H1 (cell line): ENCODE measurements at regions of chr2 and their contacts with region 1.

Region 1: GRCh38 chr2:38740851-38741731 is 10.1 kb downstream of the SRSF7 start:
- DNase-seq: no peak
- H3K4me3 ChIP-seq: no peak overlapping the region
- H3K27ac ChIP-seq: no peak overlapping the region
- H3K4me1 ChIP-seq: peaks cover 0 to 7% (median 1%) of the 10 kb centered on the region in 4 experiments; a peak in 4 of 7 replicates
- H3K27me3 ChIP-seq: no peaks in the 10 kb centered on the region
- CTCF ChIP-seq: peak in 2 of 3 experiments; percentile 11 to 17; a peak in 2 of 4 replicates
- EP300 ChIP-seq: no peak
- POLR2A ChIP-seq: 0 out of 3 replicates have a peak, but pooled peaks of 1 of the 2 experiments have one; percentile 60
- RAD21 ChIP-seq: peak; percentile 33 to 40

Region 2: DNA sequence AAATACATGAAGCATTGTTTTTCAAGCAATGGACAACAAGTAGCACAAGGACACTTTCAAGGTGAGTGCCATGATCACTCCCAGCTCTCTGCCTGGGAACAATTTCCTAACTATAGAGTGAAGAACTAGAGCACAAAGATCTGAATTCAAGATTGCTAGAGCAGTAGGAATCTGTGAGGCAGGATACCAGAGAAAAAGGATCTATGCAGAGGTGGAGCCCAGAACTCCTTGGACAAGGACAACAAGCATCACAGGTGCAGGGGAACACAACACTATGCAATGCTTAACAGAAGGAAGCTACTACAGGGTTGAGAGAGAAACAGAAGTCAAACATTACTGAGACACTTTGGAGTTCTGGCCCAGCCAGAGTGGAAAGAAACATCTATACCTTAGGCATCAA is 388.8 kb before region 1 on chr2:
- CTCF ChIA-PET with region 1: no interaction called
- POLR2A ChIA-PET with region 1: no interaction called
- DNase-seq: no peak
- H3K4me3 ChIP-seq: no peak overlapping the region
- H3K27ac ChIP-seq: no peak overlapping the region
- H3K4me1 ChIP-seq: peaks cover 0 to 6% (median 0%) of the 10 kb centered on the region in 4 experiments; a peak in 1 of 7 replicates
- H3K27me3 ChIP-seq: no peaks in the 10 kb centered on the region
- CTCF ChIP-seq: no peak
- EP300 ChIP-seq: no peak
- POLR2A ChIP-seq: no peak
- RAD21 ChIP-seq: no peak

Region 3: DNA sequence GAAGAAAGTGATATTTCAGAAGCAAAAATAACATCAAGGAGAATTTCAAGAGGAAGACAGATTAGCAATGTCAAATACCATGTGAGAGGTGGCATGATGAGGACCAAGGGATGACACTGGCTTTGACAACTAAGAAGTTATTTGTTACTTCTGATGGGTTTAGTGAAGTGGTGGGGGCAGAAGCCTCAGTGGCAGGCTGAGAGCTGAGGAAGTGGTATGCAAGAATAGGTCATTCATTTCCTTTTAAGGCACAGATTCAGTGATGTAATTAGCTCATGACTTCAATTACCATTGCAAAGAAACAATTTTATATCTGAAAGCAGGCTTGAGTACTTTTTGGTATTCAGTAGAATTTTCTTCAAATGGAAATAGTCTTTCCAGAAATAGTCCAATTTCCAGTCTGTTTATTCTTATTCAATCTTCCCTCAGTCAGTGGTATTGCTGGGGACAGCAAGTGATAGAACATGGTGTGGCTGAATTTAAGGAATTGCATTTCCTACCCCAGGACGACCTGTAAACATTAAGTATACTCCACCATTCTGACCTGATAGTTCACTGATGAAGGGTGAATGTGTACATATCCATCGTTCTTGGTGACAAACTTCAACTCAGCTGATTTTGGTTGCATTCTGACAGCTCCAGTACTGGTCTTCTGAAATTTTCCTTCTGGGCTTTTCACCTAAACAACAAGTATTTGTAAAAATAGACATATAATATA is 65.1 kb after region 1 on chr2:
- CTCF ChIA-PET with region 1: no interaction called
- POLR2A ChIA-PET with region 1: interaction called, 12 read pairs
- DNase-seq: no peak
- H3K4me3 ChIP-seq: no peak overlapping the region
- H3K27ac ChIP-seq: no peak overlapping the region
- H3K4me1 ChIP-seq: no peaks in the 10 kb centered on the region
- H3K27me3 ChIP-seq: no peaks in the 10 kb centered on the region
- CTCF ChIP-seq: no peak
- EP300 ChIP-seq: no peak
- POLR2A ChIP-seq: no peak
- RAD21 ChIP-seq: no peak

Region 4: DNA sequence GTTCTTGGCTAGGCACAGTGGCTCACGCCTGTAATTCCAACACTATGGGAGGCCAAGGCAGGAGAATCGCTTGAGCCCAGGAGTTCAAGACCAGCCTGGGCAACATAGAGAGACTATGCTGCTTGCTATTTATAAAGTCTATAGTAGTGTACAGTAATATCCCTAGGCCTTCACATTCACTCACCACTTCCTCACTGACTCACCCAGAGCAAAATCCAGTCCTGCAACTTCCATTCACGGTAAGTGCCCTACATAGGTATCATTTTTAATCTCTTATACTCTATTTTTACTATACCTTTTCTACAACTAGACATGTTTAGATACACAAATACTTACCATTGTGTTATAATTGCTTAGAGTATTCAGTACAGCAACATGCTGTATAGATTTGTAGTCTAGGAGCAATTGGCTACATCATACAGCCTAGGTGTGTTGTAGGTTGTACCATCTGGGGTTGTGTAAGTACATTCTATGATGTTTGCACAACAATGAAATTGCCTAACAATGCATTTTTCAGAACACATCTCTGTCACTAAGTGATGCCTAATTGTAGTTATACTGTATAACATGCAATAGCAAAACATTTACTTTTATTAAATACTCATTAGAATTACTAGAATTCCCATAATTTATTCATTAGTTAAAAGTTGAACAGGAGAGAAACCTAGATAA is 125.8 kb after region 1 on chr2:
- CTCF ChIA-PET with region 1: no interaction called
- POLR2A ChIA-PET with region 1: no interaction called
- DNase-seq: no peak
- H3K4me3 ChIP-seq: no peak overlapping the region
- H3K27ac ChIP-seq: no peak overlapping the region
- H3K4me1 ChIP-seq: no peaks in the 10 kb centered on the region
- H3K27me3 ChIP-seq: no peaks in the 10 kb centered on the region
- CTCF ChIP-seq: no peak
- EP300 ChIP-seq: no peak
- POLR2A ChIP-seq: no peak
- RAD21 ChIP-seq: no peak